Spleen (tissue), 13 donors: ENCODE measurements at regions of chrX and their contacts with region 1.

Region 1: GRCh38 chrX:15749642-15750610 is 11.9 kb downstream of the CA5B start:
- DNase-seq: no peak
- H3K4me3 ChIP-seq: peak overlapping the region in 1 of 8 donors; percentile 36
- H3K27ac ChIP-seq: peak overlapping the region; percentile 55 to 88 (median 82)
- H3K4me1 ChIP-seq: peaks cover 11 to 37% (median 25%) of the 10 kb centered on the region in 6 donors
- H3K27me3 ChIP-seq: no peaks in the 10 kb centered on the region
- CTCF ChIP-seq: no peak
- POLR2A ChIP-seq: no peak

Region 2: GRCh38 chrX:14817571-14817970 is 932.4 kb before region 1 on chrX:
- intact Hi-C with region 1: no loop called
- DNase-seq: no peak
- H3K4me3 ChIP-seq: no peak overlapping the region
- H3K27ac ChIP-seq: peak overlapping the region in 2 of 8 donors; percentile 46 to 58
- H3K4me1 ChIP-seq: no peaks in the 10 kb centered on the region
- H3K27me3 ChIP-seq: no peaks in the 10 kb centered on the region
- CTCF ChIP-seq: no peak
- POLR2A ChIP-seq: no peak

Region 3: GRCh38 chrX:15686818-15687685 is 62.9 kb before region 1 on chrX:
- intact Hi-C with region 1: loop called (anchors 10 kb)
- DNase-seq: no peak
- H3K4me3 ChIP-seq: no peak overlapping the region
- H3K27ac ChIP-seq: no peak overlapping the region
- H3K4me1 ChIP-seq: peaks cover 0 to 9% (median 2%) of the 10 kb centered on the region in 6 donors
- H3K27me3 ChIP-seq: no peaks in the 10 kb centered on the region
- CTCF ChIP-seq: peak; percentile 55 to 89 (median 75)
- POLR2A ChIP-seq: no peak